ENCODE measurements at regions of chr2 and their contacts with region 1.

Region 1: DNA sequence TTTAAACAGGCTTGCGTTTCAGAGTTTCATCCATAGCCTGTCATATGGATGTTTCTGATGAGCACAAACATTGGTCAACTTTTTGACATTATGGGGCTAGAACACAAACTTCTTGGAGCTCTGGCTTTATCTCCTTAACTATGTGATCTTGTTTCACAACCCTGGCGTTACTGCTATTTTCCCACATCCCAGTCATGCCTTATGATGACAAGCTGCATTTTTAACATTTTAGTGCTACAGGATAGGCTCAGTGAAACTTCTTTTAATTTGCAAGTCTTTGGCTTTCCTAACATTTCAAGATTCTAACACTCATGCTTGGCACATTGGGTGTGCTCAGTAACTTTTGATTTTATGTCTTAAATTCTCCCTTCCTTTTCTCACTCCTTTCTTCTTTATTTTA is 21.0 kb upstream of the PDE1A start:
- DNase-seq: peak; percentile 80
- ATAC-seq: peak; percentile 94
- H3K4me3 ChIP-seq: no peak overlapping the region
- H3K27ac ChIP-seq: no peak overlapping the region
- H3K4me1 ChIP-seq: peaks cover 4% of the 10 kb centered on the region
- H3K27me3 ChIP-seq: no peaks in the 10 kb centered on the region
- CTCF ChIP-seq: no peak
- POLR2A ChIP-seq: no peak
- RAD21 ChIP-seq: no peak

Region 2: DNA sequence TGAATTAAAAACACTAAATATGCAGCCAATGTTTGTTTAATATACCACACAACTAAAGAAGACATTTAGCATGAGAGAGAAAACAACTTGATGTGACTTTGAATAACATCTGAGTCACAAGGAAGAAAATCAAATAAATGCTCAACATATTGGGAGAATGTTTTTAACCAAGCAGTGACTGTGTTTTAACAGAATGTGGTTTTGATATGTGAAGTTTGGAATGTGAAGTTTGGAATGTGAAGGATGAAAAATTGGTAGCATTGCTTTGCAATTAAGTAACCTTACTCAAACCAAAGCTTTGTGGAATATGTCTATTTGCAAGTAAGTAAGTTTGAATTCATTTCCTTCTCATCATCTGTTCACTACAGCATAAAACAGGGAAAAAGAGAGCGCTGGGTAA is 140.0 kb after region 1 on chr2:
- CTCF ChIA-PET with region 1: no interaction called
- POLR2A ChIA-PET with region 1: no interaction called
- dilution Hi-C with region 1: no loop called
- in situ Hi-C with region 1: no loop called
- intact Hi-C with region 1: loop called (anchors 2 kb)
- DNase-seq: peak; percentile 94
- ATAC-seq: peak; percentile 89
- H3K4me3 ChIP-seq: no peak overlapping the region
- H3K27ac ChIP-seq: peak overlapping the region; percentile 73; the same call in 1 of the 2 replicates
- H3K4me1 ChIP-seq: peaks cover 5% of the 10 kb centered on the region
- H3K27me3 ChIP-seq: peaks cover 4% of the 10 kb centered on the region; the same call in 1 of the 2 replicates
- CTCF ChIP-seq: no peak
- POLR2A ChIP-seq: no peak
- RAD21 ChIP-seq: no peak